Activated T-helper 2 cell treated with anti-CD3 and anti-CD28 coated beads, Interferon-gamma antibody, Interleukin-2, Interleukin-4, amounts not matched to agents 10 μg/mL and 5 μg/mL and 100 μg/mL, durations not matched to agents 14 hours and 24 hours and 36 hours (primary cell): ENCODE measurements at regions of chr4 and their contacts with region 1.

Region 1: GRCh38 chr4:931960-932712 is at the starts of genes GAK and TMEM175:
- DNase-seq: peak; percentile 97
- H3K4me3 Mint-ChIP-seq: peak within 1 kb of the TSS; percentile 96
- H3K27ac Mint-ChIP-seq: peak within 1 kb of the TSS; percentile 77
- H3K4me1 Mint-ChIP-seq: peaks cover 34% of the 10 kb centered on the region
- H3K27me3 Mint-ChIP-seq: no peaks in the 10 kb centered on the region
- total RNA-seq, gene GAK: 123 and 125 TPM in 2 replicates
- total RNA-seq, gene TMEM175: 11.8 and 12.9 TPM in 2 replicates

Region 2: GRCh38 chr4:674172-675035 is 257.7 kb before region 1 on chr4 and contains the starts of genes ATP5ME and MYL5:
- intact Hi-C with region 1: loop called (anchors 5 kb)
- DNase-seq: peak; percentile 97
- H3K4me3 Mint-ChIP-seq: peak within 1 kb of the TSS; percentile 86
- H3K27ac Mint-ChIP-seq: peak within 1 kb of the TSS; percentile 85
- H3K4me1 Mint-ChIP-seq: peaks cover 7% of the 10 kb centered on the region
- H3K27me3 Mint-ChIP-seq: no peaks in the 10 kb centered on the region
- total RNA-seq, gene ATP5ME: 208 and 235 TPM in 2 replicates
- total RNA-seq, gene MYL5: 27.7 and 29.8 TPM in 2 replicates

Region 3: GRCh38 chr4:781493-782216 is 150.5 kb before region 1 on chr4:
- intact Hi-C with region 1: loop called (anchors 5 kb)
- DNase-seq: peak; percentile 100
- H3K4me3 Mint-ChIP-seq: peak overlapping the region; percentile 85
- H3K27ac Mint-ChIP-seq: peak overlapping the region; percentile 85
- H3K4me1 Mint-ChIP-seq: peaks cover 40% of the 10 kb centered on the region
- H3K27me3 Mint-ChIP-seq: peaks cover 14% of the 10 kb centered on the region

Region 4: DNA sequence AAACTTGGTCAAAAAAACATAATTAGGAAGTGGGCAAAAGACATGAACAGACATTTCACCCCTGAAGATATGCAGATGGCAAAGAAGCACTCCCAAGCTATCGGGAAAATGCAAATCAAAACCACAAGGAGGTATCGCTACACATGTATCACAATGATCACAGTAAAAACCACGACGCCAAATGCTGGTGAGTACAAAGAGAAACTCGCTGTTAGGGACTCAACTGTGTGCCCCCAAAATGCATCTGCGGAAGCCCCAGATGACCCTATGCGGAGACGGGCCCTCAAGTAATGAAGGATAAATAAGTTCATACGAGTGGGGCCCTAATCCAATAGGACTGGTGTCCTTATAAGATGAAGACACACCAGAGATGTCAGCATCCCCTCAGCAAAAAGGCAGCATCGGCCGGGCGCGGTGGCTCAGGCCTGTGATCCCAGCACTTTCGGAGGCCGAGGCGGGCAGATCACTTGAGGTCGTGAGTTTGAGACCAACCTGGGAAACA is 10.3 kb before region 1 on chr4:
- intact Hi-C with region 1: loop called (anchors 1 kb)
- DNase-seq: no peak
- H3K4me3 Mint-ChIP-seq: no peak overlapping the region
- H3K27ac Mint-ChIP-seq: peak overlapping the region; percentile 38
- H3K4me1 Mint-ChIP-seq: peaks cover 48% of the 10 kb centered on the region
- H3K27me3 Mint-ChIP-seq: no peaks in the 10 kb centered on the region

Region 5: DNA sequence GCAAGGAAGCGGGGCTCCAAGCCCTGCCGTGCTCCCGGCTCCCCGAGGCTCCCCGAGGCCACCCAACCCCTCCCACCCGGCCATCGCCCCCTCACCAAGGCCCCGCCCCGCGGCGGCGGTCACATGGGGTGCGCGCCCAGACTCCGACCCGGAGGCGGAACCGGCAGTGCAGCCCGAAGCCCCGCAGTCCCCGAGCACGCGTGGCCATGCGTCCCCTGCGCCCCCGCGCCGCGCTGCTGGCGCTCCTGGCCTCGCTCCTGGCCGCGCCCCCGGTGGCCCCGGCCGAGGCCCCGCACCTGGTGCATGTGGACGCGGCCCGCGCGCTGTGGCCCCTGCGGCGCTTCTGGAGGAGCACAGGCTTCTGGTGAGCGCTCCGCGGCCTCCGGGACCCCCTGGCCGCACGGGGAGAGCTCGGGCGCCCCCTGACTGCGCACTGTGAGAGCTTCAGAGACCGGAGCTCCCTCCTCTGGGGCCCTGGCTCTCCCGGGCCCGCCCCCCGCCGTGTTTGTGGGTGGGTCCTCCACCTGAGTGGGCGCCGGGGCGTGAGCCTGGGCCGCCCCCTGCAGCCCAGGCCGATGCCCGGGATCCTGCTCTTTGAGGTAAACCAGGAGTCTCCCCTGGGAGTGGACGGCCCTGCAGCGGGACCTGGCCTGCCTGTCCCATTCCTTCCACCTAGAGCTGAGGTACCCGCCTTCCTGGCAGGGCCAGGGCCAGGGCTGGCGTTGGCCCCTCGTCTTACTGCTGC is 54.9 kb after region 1 on chr4 and contains the start of gene IDUA:
- intact Hi-C with region 1: loop called (anchors 2 kb)
- DNase-seq: peak; percentile 80
- H3K4me3 Mint-ChIP-seq: peak within 1 kb of the TSS; percentile 87
- H3K27ac Mint-ChIP-seq: peak within 1 kb of the TSS; percentile 83
- H3K4me1 Mint-ChIP-seq: peaks cover 17% of the 10 kb centered on the region
- H3K27me3 Mint-ChIP-seq: no peaks in the 10 kb centered on the region
- total RNA-seq, gene IDUA: 23.6 and 25.5 TPM in 2 replicates